HepG2 (cell line): ENCODE measurements at regions of chr7 and their contacts with region 1.

Region 1: DNA sequence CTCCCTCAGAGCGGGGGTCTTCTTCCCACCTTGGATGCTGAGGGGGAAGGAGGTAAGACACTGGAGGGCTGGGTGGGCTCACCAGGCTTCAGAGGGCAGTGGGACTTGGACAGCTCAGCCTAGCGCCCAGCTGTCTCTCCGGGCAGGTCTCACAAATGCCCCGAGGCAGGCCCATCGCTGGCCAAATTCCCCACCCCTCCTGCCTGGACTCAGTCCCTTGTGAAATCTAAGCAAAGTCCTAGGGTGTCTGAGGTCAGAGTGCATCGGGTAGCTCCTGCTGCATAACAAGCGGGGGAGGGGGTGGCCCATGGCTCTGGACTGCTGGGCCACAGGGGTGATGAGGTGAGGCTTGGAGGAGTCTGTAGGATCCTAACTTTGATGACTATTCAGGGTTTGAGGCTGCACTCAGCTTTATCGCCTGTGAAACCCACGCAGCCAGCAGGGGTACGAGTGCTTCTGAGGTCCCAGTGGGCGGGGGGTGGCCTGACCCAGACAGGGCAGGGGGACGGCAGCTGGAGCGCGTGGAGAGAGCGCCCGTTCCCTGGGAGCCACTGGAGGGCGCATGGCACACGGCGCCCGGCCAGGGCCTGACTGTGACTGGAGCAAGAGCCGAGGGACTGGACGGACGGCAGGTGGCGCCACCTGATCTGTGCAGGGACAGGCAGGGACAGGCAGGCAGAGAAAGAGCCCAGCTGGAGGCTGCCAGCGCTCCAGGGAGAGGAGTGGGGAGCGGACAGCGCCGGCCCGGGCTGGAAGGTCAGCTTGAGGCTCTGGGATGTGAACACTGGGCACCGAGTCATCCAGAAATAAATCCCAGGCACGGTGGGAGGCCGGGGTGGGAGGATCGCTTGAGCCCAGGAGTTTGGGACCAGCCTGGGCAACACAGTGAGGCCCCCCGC is 10.0 kb downstream of the CYP2W1 start:
- DNase-seq: peak; percentile 93
- ATAC-seq: peak; percentile 82
- H3K4me3 ChIP-seq: peak overlapping the region; percentile 54 to 74 (median 61); a peak in 5 of 6 replicates
- H3K27ac ChIP-seq: peak overlapping the region; percentile 91
- H3K4me1 ChIP-seq: peaks cover 35% of the 10 kb centered on the region
- H3K27me3 ChIP-seq: no peaks in the 10 kb centered on the region
- CTCF ChIP-seq: peak; percentile 100
- EP300 ChIP-seq: peak in 1 of 2 experiments; percentile 60; a peak in 2 of 4 replicates
- POLR2A ChIP-seq: peak in 1 of 2 experiments; percentile 53; a peak in 2 of 4 replicates
- RAD21 ChIP-seq: peak; percentile 100

Region 2: DNA sequence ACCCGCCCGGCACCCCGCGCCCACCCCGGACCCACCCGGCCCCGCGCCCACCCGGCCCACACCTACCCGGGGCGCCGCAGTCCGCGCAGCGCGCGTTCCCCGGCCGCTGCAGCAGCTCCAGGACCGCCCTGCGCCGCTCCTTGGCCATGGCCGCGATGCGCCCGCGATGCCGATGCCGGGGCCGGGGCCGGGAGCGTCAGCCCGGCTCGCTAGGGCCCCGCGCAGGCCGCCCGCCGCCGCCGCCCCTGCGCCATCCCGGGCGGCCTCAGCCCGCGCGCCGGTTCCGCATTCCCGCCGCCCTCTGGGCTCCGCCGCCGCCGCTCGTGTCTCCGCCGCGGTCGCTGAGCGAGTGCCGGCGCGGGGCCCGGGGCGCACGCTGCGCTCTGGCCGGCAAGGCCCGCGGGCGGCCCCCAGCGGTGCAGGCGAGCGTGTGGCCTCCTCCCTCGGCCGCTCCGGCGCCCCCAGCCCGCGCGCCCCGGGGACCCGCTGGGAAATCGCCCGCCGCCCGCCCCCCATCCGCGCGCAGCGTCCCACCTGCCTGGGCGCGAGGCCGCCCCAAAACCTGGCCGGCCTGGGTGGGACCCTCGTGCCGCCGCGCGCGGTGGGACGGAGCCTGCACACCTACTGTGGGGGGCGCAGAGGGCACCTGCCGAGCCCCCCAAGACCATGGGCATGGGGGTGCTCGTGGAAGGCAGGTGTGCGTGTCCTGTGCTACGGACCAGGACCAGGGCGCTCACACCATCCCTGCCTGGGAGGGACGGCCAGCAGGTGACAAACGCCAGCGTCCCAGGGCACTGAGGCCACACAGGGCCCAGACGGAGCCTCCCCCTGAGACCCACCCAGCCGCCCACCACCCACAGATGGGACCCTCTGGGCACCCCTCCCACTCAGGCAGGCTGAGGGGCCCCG is 38.4 kb before region 1 on chr7 and contains the start of gene ADAP1:
- CTCF ChIA-PET with region 1: interaction called, 4 read pairs
- POLR2A ChIA-PET with region 1: interaction called, 25 read pairs
- in situ Hi-C with region 1: no loop called
- intact Hi-C with region 1: no loop called
- DNase-seq: no peak
- ATAC-seq: peak; percentile 7; the same call in 2 of the 3 replicates
- H3K4me3 ChIP-seq: peak within 1 kb of the TSS; percentile 59 to 81 (median 76)
- H3K27ac ChIP-seq: no peak within 1 kb of the TSS
- H3K4me1 ChIP-seq: peaks cover 60% of the 10 kb centered on the region
- H3K27me3 ChIP-seq: no peaks in the 10 kb centered on the region
- CTCF ChIP-seq: peak; percentile 43; the same call in 1 of the 2 replicates
- EP300 ChIP-seq: no peak
- POLR2A ChIP-seq: no peak
- RAD21 ChIP-seq: peak; percentile 89
- total RNA-seq, gene ADAP1: 18.3 and 24.6 TPM in 2 replicates

Region 3: DNA sequence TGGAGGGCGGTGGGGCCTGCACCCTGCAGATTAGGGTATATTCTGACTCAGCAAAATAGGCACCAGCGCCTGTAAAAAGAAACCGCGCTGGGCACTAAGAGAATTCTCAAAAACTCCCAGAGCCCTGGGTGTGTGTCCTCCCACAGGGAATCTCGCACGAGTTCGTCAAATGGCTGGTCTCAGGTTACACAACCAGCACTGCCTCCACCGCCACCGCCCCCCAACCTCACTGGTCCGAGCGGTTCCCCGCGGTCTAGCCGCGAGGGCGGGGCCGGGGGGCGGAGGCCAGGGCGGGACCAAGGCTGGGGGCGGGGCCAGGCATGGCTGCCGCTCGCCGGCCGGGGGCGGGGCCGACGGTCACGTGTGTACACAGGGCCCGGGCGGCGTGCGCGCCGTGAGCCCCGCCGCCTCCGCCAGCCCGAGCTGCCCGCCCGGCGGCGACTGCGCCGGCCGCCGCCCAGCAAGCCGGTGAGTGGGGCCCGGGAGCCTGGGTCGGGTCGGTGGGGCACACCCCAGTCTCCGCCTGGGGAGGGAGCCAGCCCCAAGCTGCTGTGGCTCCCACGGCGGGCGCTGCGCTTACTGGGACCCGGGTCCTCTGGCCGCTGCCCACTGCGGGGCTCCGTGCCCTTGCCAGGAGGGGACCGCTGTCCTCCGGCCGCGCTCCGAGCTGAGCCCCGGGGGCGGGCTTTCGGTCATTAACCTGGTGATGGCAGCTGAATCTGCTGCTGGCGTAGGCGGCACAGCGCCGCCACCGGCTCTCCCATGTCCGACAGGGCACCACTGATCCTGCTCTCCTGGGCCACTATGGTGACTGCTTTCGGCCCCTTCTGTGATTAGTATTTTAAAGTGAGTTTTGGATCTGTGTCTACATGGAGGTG is 51.5 kb after region 1 on chr7 and contains the start of gene GPR146:
- CTCF ChIA-PET with region 1: interaction called, 3 read pairs
- POLR2A ChIA-PET with region 1: interaction called, 17 read pairs
- in situ Hi-C with region 1: no loop called
- intact Hi-C with region 1: loop called (anchors 5 kb)
- DNase-seq: peak; percentile 94
- ATAC-seq: peak; percentile 86
- H3K4me3 ChIP-seq: peak within 1 kb of the TSS; percentile 72 to 85 (median 73)
- H3K27ac ChIP-seq: peak within 1 kb of the TSS; percentile 94
- H3K4me1 ChIP-seq: peaks cover 81% of the 10 kb centered on the region
- H3K27me3 ChIP-seq: no peaks in the 10 kb centered on the region; a peak in 2 of 5 replicates
- CTCF ChIP-seq: peak; percentile 69
- EP300 ChIP-seq: peak in 1 of 2 experiments; percentile 25; a peak in 1 of 4 replicates
- POLR2A ChIP-seq: peak; percentile 35 to 63; a peak in 2 of 4 replicates
- RAD21 ChIP-seq: peak; percentile 67
- total RNA-seq, gene GPR146: 0.84 and 2.0 TPM in 2 replicates

Region 4: GRCh38 chr7:1086588-1087464 is 93.9 kb after region 1 on chr7:
- CTCF ChIA-PET with region 1: interaction called, 15 read pairs
- POLR2A ChIA-PET with region 1: interaction called, 8 read pairs
- in situ Hi-C with region 1: no loop called
- intact Hi-C with region 1: no loop called
- DNase-seq: peak; percentile 68
- ATAC-seq: peak; percentile 72
- H3K4me3 ChIP-seq: peak overlapping the region; percentile 66 to 79 (median 77)
- H3K27ac ChIP-seq: peak overlapping the region; percentile 74
- H3K4me1 ChIP-seq: peaks cover 50% of the 10 kb centered on the region
- H3K27me3 ChIP-seq: no peaks in the 10 kb centered on the region
- CTCF ChIP-seq: peak; percentile 95
- EP300 ChIP-seq: no peak
- POLR2A ChIP-seq: peak in 1 of 2 experiments; percentile 57; a peak in 2 of 4 replicates
- RAD21 ChIP-seq: peak; percentile 85

Region 5: DNA sequence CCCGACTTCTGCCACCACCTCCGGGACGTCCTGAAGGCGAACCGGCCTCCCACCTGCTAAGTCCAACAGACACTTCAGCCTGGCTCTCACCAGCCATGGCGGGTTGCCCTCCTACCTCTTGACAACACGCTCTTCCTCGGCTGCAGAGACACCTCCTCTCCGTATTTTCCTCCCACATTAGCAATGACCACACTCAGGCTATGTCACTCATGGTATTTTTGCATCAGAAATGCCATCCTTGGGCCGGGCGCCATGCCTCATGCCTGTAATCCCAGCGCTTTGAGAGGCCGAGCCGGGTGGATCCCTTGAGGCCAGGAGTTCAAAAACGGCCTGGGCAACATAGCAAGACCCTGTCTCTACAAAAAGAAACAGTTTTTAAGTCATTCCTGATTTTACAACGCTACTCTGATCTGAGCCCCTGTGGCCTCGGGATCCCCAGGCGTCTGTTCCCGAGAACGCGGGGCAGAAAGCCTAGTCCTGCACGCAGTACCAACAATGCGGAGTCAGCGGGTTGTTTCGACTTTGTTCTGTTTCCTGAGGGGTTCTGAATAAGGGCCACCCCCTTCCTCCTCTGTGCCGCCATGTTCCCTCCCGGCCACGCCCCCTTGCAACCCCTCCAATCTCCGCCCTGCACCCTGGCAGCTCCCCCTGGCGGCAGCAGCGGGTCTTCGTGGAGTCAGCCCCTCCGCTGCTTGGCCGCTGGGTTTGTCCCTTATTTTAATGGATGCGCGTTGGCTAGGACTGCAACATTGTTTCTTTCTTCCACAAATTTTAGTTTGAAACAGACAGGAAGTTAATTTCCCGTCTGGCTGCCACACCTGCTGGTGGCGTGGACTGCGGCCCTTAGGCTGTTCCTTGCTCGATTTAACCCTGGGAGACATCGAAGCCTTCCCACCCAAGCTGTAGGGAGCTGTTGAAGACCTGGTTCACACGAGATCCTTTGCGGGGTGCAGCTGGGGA is 176.7 kb after region 1 on chr7:
- CTCF ChIA-PET with region 1: interaction called, 5 read pairs
- POLR2A ChIA-PET with region 1: interaction called, 16 read pairs
- in situ Hi-C with region 1: no loop called
- intact Hi-C with region 1: no loop called
- DNase-seq: peak; percentile 83
- ATAC-seq: peak; percentile 93
- H3K4me3 ChIP-seq: peak overlapping the region; percentile 81 to 94 (median 94)
- H3K27ac ChIP-seq: peak overlapping the region; percentile 95
- H3K4me1 ChIP-seq: peaks cover 35% of the 10 kb centered on the region
- H3K27me3 ChIP-seq: no peaks in the 10 kb centered on the region; a peak in 1 of 5 replicates
- CTCF ChIP-seq: peak; percentile 98
- EP300 ChIP-seq: peak in 1 of 2 experiments; percentile 42; a peak in 1 of 4 replicates
- POLR2A ChIP-seq: peak; percentile 80 to 84
- RAD21 ChIP-seq: peak; percentile 80